GM12878 (cell line): ENCODE measurements at regions of chr12 and their contacts with region 1.

Region 1: GRCh38 chr12:24948757-24949722 is at the start of gene BCAT1:
- DNase-seq: no peak
- ATAC-seq: peak; percentile 41
- H3K4me3 ChIP-seq: peak within 1 kb of the TSS; percentile 85
- H3K27ac ChIP-seq: peak within 1 kb of the TSS; percentile 97
- H3K4me1 ChIP-seq: peaks cover 52% of the 10 kb centered on the region
- H3K27me3 ChIP-seq: no peaks in the 10 kb centered on the region
- CTCF ChIP-seq: peak in 2 of 3 experiments; percentile 7 to 11; a peak in 1 of 6 replicates
- EP300 ChIP-seq: no peak
- POLR2A ChIP-seq: peak; percentile 88
- RAD21 ChIP-seq: no peak
- polyA plus RNA-seq, gene BCAT1: 26.2 to 38.1 TPM

Region 2: DNA sequence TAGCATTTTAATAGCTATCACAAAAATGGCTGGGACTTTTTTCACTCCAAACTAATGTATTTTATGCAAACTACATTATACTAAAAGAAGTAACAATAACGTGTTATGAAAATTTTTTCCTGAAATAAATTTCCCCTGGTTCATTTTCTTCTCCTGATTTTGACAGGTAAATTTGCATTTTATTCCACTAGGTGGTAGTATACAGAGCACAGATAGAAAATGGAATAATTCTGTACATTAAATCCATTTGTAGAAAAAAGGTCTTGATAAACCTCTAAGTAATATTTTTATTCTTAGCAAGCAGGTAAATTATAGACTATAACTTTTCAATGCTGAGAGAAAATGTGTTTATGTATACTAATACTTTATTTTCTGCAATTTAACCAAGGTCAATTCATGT is 96.6 kb before region 1 on chr12:
- CTCF ChIA-PET with region 1: interaction called, 21 read pairs
- POLR2A ChIA-PET with region 1: interaction called, 3 read pairs
- RAD21 ChIA-PET with region 1: interaction called, 6 read pairs
- SMC1A ChIA-PET with region 1: interaction called, 41 read pairs
- in situ Hi-C with region 1: no loop called
- intact Hi-C with region 1: no loop called
- DNase-seq: no peak
- ATAC-seq: no peak; the same call in 2 of the 3 replicates
- H3K4me3 ChIP-seq: no peak overlapping the region
- H3K27ac ChIP-seq: no peak overlapping the region
- H3K4me1 ChIP-seq: no peaks in the 10 kb centered on the region
- H3K27me3 ChIP-seq: no peaks in the 10 kb centered on the region
- CTCF ChIP-seq: peak in 2 of 3 experiments; percentile 14 to 28; a peak in 2 of 6 replicates
- EP300 ChIP-seq: no peak
- POLR2A ChIP-seq: no peak
- RAD21 ChIP-seq: peak; percentile 46

Region 3: GRCh38 chr12:24902511-24903328 is 46.3 kb before region 1 on chr12:
- CTCF ChIA-PET with region 1: interaction called, 8 read pairs
- POLR2A ChIA-PET with region 1: interaction called, 6 read pairs
- RAD21 ChIA-PET with region 1: interaction called, 9 read pairs
- SMC1A ChIA-PET with region 1: interaction called, 18 read pairs
- in situ Hi-C with region 1: no loop called
- intact Hi-C with region 1: loop called (anchors 2 kb)
- DNase-seq: no peak
- ATAC-seq: peak; percentile 74
- H3K4me3 ChIP-seq: peak overlapping the region; percentile 89
- H3K27ac ChIP-seq: peak overlapping the region; percentile 48; the same call in 1 of the 2 replicates
- H3K4me1 ChIP-seq: peaks cover 20% of the 10 kb centered on the region
- H3K27me3 ChIP-seq: no peaks in the 10 kb centered on the region
- CTCF ChIP-seq: no peak
- EP300 ChIP-seq: no peak
- POLR2A ChIP-seq: peak; percentile 39; the same call in 1 of the 2 replicates
- RAD21 ChIP-seq: no peak

Region 4: GRCh38 chr12:24922090-24922489 is 26.9 kb before region 1 on chr12:
- CTCF ChIA-PET with region 1: interaction called, 3 read pairs
- POLR2A ChIA-PET with region 1: interaction called, 3 read pairs
- RAD21 ChIA-PET with region 1: interaction called, 5 read pairs
- SMC1A ChIA-PET with region 1: interaction called, 22 read pairs
- in situ Hi-C with region 1: no loop called
- intact Hi-C with region 1: no loop called
- DNase-seq: no peak
- ATAC-seq: peak; percentile 78
- H3K4me3 ChIP-seq: no peak overlapping the region
- H3K27ac ChIP-seq: no peak overlapping the region
- H3K4me1 ChIP-seq: no peaks in the 10 kb centered on the region
- H3K27me3 ChIP-seq: no peaks in the 10 kb centered on the region
- CTCF ChIP-seq: no peak
- EP300 ChIP-seq: no peak
- POLR2A ChIP-seq: no peak
- RAD21 ChIP-seq: no peak

Region 5: GRCh38 chr12:24931666-24932405 is 17.2 kb before region 1 on chr12:
- CTCF ChIA-PET with region 1: interaction called, 9 read pairs
- POLR2A ChIA-PET with region 1: interaction called, 7 read pairs
- RAD21 ChIA-PET with region 1: interaction called, 7 read pairs
- SMC1A ChIA-PET with region 1: interaction called, 27 read pairs
- in situ Hi-C with region 1: no loop called
- intact Hi-C with region 1: no loop called
- DNase-seq: peak; percentile 79
- ATAC-seq: peak; percentile 91
- H3K4me3 ChIP-seq: 0 out of 2 replicates have a peak overlapping the region, but pooled peaks have one; percentile 45
- H3K27ac ChIP-seq: peak overlapping the region; percentile 50
- H3K4me1 ChIP-seq: peaks cover 24% of the 10 kb centered on the region
- H3K27me3 ChIP-seq: no peaks in the 10 kb centered on the region
- CTCF ChIP-seq: no peak
- EP300 ChIP-seq: peak in 1 of 2 experiments; percentile 53; a peak in 1 of 4 replicates
- POLR2A ChIP-seq: no peak
- RAD21 ChIP-seq: no peak